ENCODE measurements at regions of chr1 and their contacts with region 1.

Region 1: GRCh38 chr1:160664573-160665051 is 17.8 kb upstream of the SLAMF1 start:
- DNase-seq: peak in 4 of 9 donors; percentile 44 to 59 (median 46)
- ATAC-seq: peak; percentile 84
- H3K4me3 ChIP-seq: peak overlapping the region; percentile 22
- H3K4me3 Mint-ChIP-seq: peak overlapping the region; percentile 53 to 87 (median 76)
- H3K27ac ChIP-seq: peak overlapping the region; percentile 10
- H3K27ac Mint-ChIP-seq: peak overlapping the region; percentile 77 to 96 (median 89)
- H3K4me1 ChIP-seq: peaks cover 44 to 49% of the 10 kb centered on the region in 2 donors
- H3K4me1 Mint-ChIP-seq: peaks cover 52 to 84% (median 71%) of the 10 kb centered on the region in 7 donors
- H3K27me3 ChIP-seq: no peaks in the 10 kb centered on the region
- H3K27me3 Mint-ChIP-seq: no peaks in the 10 kb centered on the region

Region 2: DNA sequence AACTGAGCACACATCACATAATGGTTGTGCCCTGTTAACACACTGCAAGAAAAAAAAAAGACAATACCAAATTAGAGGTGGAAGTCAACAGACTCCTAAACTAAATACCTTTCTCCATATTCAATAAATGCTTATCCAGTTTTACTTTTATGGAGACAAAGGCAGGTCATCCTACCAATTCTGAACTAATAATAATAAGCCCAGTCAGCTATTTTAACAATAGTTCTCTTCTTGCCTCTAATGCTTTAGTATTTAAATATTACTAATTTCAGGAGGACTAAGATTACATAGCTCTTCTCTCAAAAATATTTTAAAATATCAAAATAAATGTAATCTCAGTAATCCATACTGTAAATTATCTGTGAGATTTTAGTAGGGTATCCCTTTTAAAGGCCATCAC is 332.1 kb before region 1 on chr1:
- CTCF ChIA-PET with region 1: interaction called, 10 read pairs
- POLR2A ChIA-PET with region 1: no interaction called
- intact Hi-C with region 1: no loop called
- DNase-seq: no peak
- ATAC-seq: no peak
- H3K4me3 ChIP-seq: no peak overlapping the region
- H3K4me3 Mint-ChIP-seq: no peak overlapping the region
- H3K27ac ChIP-seq: no peak overlapping the region
- H3K27ac Mint-ChIP-seq: no peak overlapping the region
- H3K4me1 ChIP-seq: no peaks in the 10 kb centered on the region
- H3K4me1 Mint-ChIP-seq: peaks cover 0 to 10% (median 5%) of the 10 kb centered on the region in 7 donors
- H3K27me3 ChIP-seq: no peaks in the 10 kb centered on the region
- H3K27me3 Mint-ChIP-seq: no peaks in the 10 kb centered on the region

Region 3: DNA sequence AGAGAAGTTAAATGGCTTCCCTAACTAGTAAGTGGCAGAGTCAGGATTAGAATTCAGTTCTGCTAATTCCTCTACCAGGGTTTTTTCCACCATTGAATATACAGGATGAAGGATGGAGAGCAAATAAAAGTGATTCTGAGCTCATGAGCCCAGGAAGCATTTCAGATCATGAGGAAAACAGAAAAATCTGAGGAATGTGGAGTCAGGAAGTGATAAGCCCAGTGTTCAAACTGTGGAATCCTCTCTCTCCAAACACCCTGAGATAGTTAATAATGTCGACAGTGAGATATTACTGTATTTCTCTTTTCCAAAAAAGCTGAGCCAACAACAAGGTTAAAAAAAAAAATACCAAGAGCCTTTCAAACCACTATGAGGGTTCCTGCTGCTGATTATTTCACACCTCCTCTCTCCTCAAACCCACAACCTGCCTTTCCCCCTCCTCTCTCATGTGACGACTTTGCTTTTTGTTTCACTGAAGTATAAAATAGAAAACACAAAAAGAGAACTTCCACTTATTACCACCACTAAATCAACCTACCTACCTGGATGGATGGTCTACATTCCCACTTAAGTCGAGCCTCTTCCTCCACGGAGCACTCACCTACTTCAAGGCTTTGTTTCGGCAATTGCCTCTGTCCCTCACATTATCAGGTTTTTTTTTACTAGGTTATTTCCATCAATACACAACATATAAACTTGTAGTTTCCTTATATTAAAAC is 26.6 kb before region 1 on chr1:
- CTCF ChIA-PET with region 1: interaction called, 5 read pairs
- POLR2A ChIA-PET with region 1: interaction called, 9 read pairs
- intact Hi-C with region 1: loop called in 1 of 2 experiments (anchors 2 kb)
- DNase-seq: peak in 7 of 9 donors; percentile 63 to 83 (median 74)
- ATAC-seq: peak; percentile 86
- H3K4me3 ChIP-seq: peak overlapping the region; percentile 39
- H3K4me3 Mint-ChIP-seq: peak overlapping the region; percentile 65 to 100 (median 84)
- H3K27ac ChIP-seq: peak overlapping the region; percentile 75
- H3K27ac Mint-ChIP-seq: peak overlapping the region; percentile 92 to 99 (median 95)
- H3K4me1 ChIP-seq: peaks cover 92 to 96% of the 10 kb centered on the region in 2 donors
- H3K4me1 Mint-ChIP-seq: peaks cover 64 to 100% (median 97%) of the 10 kb centered on the region in 7 donors
- H3K27me3 ChIP-seq: no peaks in the 10 kb centered on the region
- H3K27me3 Mint-ChIP-seq: no peaks in the 10 kb centered on the region

Measured in naive thymus-derived CD4-positive, alpha-beta T cell (primary cell).